Naive thymus-derived CD4-positive, alpha-beta T cell (primary cell): ENCODE measurements at regions of chr6 and their contacts with region 1.

Region 1: GRCh38 chr6:33454009-33454946 is at the start of gene ZBTB9:
- DNase-seq: peak; percentile 80 to 93 (median 92)
- ATAC-seq: peak; percentile 100
- H3K4me3 ChIP-seq: peak within 1 kb of the TSS; percentile 93
- H3K4me3 Mint-ChIP-seq: peak within 1 kb of the TSS; percentile 88 to 99 (median 95)
- H3K27ac ChIP-seq: peak within 1 kb of the TSS; percentile 88
- H3K27ac Mint-ChIP-seq: peak within 1 kb of the TSS; percentile 86 to 98 (median 92)
- H3K4me1 ChIP-seq: peaks cover 12 to 22% of the 10 kb centered on the region in 2 donors
- H3K4me1 Mint-ChIP-seq: peaks cover 21 to 57% (median 45%) of the 10 kb centered on the region in 7 donors
- H3K27me3 ChIP-seq: no peaks in the 10 kb centered on the region
- H3K27me3 Mint-ChIP-seq: no peaks in the 10 kb centered on the region
- total RNA-seq, gene ZBTB9: 3.3 to 14.0 (median 9.8) TPM

Region 2: DNA sequence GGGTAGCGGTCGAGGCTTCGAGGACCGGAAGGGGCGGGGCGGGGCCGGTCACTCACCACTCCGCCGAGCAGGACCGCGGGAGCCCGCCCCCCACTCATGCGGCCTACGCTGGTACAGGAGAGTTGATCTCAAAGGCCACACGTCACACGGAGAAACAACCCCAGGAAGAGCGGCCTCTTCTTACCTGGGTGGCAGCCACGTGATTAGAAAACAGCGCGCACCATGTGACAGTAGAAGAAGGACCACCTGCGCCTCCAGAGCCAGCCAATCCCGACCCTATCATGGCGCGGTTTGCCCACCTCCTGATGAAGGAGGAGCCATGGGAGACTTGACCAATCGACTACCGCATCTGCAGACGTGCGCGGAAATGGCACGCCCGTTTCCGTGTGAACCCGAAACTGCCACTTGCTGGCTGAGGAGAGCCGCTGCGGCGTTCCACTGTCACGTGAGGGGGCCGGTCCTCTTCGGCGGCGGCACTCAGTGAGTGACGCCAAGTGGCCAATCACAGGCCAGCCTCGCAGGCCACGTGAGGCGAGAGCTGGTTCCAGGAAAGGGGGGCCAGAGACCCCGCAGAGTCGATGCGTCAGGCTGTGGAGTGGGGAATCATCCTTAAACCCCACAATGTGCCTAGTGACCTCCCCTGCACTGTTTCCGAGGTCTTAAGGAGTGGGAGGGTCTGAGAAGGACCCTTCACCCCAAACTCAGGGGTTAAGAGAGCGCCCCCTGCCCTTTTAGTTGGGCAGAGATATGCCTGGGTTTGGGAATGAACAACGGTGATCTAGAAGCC is 36.2 kb before region 1 on chr6 and contains the start of gene CUTA:
- CTCF ChIA-PET with region 1: interaction called, 3 read pairs
- POLR2A ChIA-PET with region 1: interaction called, 8 read pairs
- intact Hi-C with region 1: loop called (anchors 1 kb)
- DNase-seq: peak; percentile 91 to 100 (median 99)
- ATAC-seq: peak; percentile 92
- H3K4me3 ChIP-seq: peak within 1 kb of the TSS; percentile 74
- H3K4me3 Mint-ChIP-seq: peak within 1 kb of the TSS; percentile 88 to 97 (median 94)
- H3K27ac ChIP-seq: peak within 1 kb of the TSS; percentile 94
- H3K27ac Mint-ChIP-seq: peak within 1 kb of the TSS; percentile 98 to 100 (median 99)
- H3K4me1 ChIP-seq: peaks cover 31 to 54% of the 10 kb centered on the region in 2 donors
- H3K4me1 Mint-ChIP-seq: peaks cover 60 to 89% (median 73%) of the 10 kb centered on the region in 7 donors
- H3K27me3 ChIP-seq: no peaks in the 10 kb centered on the region
- H3K27me3 Mint-ChIP-seq: no peaks in the 10 kb centered on the region
- total RNA-seq, gene CUTA: 148 to 235 (median 158) TPM

Region 3: DNA sequence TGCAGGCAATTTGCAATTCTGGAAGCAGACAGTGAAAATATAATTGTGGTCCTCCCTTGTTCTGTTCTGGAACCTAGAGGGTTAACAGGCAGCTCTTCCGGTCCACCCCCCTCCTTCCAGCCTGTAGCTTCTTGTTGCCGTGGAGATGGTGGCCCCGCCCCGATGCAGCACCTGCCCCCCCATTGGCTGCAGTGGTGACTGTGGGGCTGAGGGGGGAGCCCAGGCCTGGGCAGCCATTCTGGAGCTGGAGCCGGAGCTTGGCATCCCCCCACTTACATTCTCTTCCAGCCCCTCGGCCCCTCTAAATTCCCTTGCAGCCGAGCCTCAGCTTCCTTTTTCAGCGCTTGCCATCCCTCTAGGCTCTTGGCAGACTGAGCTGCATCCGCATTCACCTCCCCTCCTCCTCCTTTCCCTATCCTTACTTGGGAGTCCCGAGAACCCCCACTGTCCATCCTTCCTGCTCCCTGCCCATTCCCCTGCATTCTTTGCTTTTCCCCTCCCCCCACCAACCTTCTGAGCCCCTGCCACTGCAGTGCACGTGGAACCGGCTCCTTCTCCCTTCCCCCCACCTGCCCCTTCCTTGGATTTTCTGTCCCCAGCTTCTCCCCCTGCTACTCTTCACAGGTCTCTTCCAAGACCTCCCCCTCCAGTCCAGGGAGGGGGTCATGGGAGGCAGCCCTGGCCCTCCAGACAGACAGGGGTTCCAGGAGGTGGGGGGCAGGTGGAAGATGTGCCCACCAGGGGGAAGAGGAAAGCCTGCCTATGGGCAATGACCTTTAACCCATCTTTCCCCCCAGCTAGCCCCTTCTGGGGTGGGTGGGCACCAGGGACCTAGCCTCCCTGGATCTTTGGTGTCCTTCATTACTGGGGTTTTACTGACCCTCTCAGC is 23.0 kb before region 1 on chr6:
- CTCF ChIA-PET with region 1: interaction called, 6 read pairs
- POLR2A ChIA-PET with region 1: interaction called, 37 read pairs
- intact Hi-C with region 1: loop called (anchors 1 kb)
- DNase-seq: peak; percentile 65 to 89 (median 87)
- ATAC-seq: peak; percentile 82
- H3K4me3 ChIP-seq: peak overlapping the region; percentile 52
- H3K4me3 Mint-ChIP-seq: peak overlapping the region; percentile 86 to 98 (median 92)
- H3K27ac ChIP-seq: peak overlapping the region; percentile 88
- H3K27ac Mint-ChIP-seq: peak overlapping the region; percentile 81 to 98 (median 96)
- H3K4me1 ChIP-seq: peaks cover 42 to 51% of the 10 kb centered on the region in 2 donors
- H3K4me1 Mint-ChIP-seq: peaks cover 56 to 69% (median 64%) of the 10 kb centered on the region in 7 donors
- H3K27me3 ChIP-seq: no peaks in the 10 kb centered on the region
- H3K27me3 Mint-ChIP-seq: no peaks in the 10 kb centered on the region

Region 4: DNA sequence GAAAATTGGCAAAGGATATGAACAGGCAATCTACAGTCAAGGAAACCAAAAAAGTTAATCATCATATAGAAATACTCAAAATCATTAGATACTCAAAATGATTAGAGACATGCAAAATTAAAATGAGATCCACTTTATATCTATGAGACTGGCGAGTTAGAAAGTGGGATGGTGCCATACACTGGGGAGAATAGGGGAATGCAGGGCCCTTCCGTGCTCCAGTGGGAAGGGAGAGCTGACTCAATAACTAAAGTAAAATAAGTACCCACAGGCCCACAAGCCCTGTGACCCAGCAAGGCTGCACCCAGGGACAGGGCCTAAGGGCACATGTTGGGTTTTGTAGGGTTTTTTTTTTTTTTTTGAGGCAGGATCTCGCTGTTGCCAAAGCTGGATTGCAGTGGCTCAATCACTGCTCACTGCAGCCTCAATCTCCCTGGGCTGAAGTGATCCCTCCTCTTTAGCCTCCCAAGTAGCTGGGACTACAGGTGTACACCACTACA is 80.9 kb after region 1 on chr6:
- CTCF ChIA-PET with region 1: no interaction called
- POLR2A ChIA-PET with region 1: interaction called, 9 read pairs
- intact Hi-C with region 1: loop called (anchors 2 kb)
- DNase-seq: no peak
- ATAC-seq: no peak
- H3K4me3 ChIP-seq: no peak overlapping the region
- H3K4me3 Mint-ChIP-seq: no peak overlapping the region
- H3K27ac ChIP-seq: no peak overlapping the region
- H3K27ac Mint-ChIP-seq: peak overlapping the region in 3 of 9 donors; percentile 9 to 74 (median 50)
- H3K4me1 ChIP-seq: peaks cover 0 to 10% of the 10 kb centered on the region in 2 donors
- H3K4me1 Mint-ChIP-seq: peaks cover 9 to 32% (median 27%) of the 10 kb centered on the region in 7 donors
- H3K27me3 ChIP-seq: no peaks in the 10 kb centered on the region
- H3K27me3 Mint-ChIP-seq: peaks cover 0 to 2% (median 0%) of the 10 kb centered on the region in 5 donors

Region 5: DNA sequence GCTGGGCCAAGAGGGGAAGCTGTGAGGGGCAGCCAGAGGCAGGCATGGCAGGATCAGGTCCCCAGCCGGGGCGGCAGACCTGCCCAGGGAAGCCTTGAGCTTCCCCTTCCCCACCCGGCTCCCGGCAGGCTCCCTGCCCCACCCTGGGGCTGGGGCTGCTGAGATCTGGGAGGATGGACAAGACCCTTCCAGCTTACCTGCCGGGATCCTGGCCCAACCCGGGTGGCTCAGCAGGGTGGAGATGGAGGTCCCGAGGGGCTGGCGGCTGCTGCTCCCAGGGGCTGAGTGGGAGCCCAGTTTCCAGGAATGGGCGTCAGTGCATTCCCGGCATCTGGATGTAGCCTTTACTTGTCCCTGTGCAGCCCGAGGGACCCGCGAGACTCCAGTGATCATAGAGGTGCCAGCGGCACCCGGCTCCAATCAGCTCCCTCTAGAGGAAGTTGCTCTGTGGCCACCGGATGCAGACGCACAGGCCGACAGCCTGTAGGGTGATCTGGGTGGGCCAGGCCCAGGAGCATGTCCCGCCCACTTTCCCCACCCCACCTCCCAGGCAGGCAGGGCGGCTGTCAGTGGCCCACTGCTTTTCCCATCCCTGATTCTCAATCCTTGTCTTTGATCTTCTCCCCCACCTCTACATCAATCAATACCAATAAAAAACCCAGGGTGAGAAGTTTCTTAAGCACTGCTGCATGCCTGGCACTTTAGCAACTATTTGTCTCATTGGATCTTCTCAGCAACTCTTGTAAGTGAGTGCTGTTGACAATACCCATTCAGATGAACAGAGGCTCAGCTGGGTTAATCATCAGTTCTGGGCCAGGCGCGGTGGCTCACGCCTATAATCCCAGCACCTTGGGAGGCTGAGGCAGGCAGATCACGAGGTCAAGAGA is 125.8 kb after region 1 on chr6 and contains the start of gene BAK1:
- CTCF ChIA-PET with region 1: interaction called, 3 read pairs
- POLR2A ChIA-PET with region 1: interaction called, 5 read pairs
- intact Hi-C with region 1: loop called (anchors 1 kb)
- DNase-seq: peak; percentile 54 to 86 (median 78)
- ATAC-seq: peak; percentile 98
- H3K4me3 ChIP-seq: peak within 1 kb of the TSS; percentile 92
- H3K4me3 Mint-ChIP-seq: peak within 1 kb of the TSS; percentile 93 to 99 (median 96)
- H3K27ac ChIP-seq: peak within 1 kb of the TSS; percentile 83
- H3K27ac Mint-ChIP-seq: peak within 1 kb of the TSS; percentile 94 to 99 (median 97)
- H3K4me1 ChIP-seq: peaks cover 13 to 25% of the 10 kb centered on the region in 2 donors
- H3K4me1 Mint-ChIP-seq: peaks cover 26 to 43% (median 39%) of the 10 kb centered on the region in 7 donors
- H3K27me3 ChIP-seq: no peaks in the 10 kb centered on the region
- H3K27me3 Mint-ChIP-seq: no peaks in the 10 kb centered on the region
- total RNA-seq, gene BAK1: 16.9 to 78.8 (median 22.0) TPM